ENCODE measurements at regions of chr16 and their contacts with region 1.

Region 1: DNA sequence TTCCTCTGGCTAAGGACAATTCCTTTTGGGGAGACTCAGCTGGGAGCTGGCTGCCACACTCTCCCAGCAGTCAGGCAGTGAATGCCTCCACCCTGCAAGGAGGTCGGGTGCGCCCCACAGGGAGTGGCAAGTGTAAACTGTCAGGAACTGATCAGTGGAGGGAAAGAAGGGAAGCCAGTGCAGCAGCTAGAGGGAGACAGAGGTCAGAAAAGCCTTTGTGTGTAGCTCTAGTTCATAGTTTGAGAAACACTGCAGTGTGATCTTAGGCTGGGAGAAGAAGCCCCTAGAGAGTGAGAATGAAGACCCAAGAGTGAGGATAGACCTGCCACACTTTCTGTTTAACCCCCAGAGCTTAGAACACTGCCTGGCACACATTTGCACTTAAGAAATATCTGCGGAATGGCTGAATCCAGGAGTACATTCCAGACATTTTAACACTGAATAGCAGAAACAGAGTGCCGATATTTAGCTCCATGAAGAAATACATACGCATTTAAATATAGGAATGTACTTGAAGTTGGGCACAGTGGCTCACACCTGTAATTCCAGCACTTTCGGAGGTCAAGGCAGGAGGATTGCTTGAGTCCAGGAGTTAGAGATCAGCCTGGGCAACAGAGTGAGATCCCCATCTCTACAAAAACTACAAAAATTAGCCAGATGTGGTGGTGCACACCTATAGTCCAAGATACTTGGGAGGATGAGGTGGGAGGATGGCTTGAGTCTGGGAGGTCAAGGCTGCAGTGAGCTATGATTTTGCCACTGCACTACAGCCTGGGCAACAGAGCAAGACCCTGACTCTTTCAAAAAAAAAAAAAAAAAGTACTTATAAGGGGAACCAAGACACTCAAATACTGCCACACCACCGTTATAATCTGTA is 11.1 kb upstream of the SLC5A11 start:
- DNase-seq: peak; percentile 82
- H3K4me3 ChIP-seq: no peak overlapping the region
- H3K27ac ChIP-seq: no peak overlapping the region
- H3K4me1 ChIP-seq: peaks cover 8% of the 10 kb centered on the region
- H3K27me3 ChIP-seq: no peaks in the 10 kb centered on the region
- CTCF ChIP-seq: peak; percentile 47

Region 2: DNA sequence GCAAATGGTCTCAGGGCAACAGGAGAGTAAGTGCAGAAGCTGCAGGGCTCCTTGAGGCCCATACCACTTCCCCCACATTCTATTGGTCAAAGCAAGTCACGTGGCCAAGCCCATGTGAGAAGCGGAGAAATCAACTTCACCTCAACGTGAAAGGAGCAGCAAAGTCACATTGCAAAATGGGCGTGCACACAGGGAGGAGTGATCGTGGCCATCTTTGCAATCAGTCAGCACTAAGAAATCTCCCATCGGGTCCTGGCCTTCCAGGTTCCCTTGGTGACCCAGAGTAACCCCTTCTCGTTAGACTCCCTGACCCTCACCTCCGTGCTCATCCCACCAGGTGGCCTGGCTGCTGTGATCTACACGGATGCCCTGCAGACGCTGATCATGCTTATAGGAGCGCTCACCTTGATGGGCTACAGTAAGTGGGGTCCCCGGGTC is 49.0 kb after region 1 on chr16:
- intact Hi-C with region 1: no loop called
- DNase-seq: no peak
- H3K4me3 ChIP-seq: no peak overlapping the region
- H3K27ac ChIP-seq: no peak overlapping the region
- H3K4me1 ChIP-seq: no peaks in the 10 kb centered on the region
- H3K27me3 ChIP-seq: no peaks in the 10 kb centered on the region
- CTCF ChIP-seq: no peak

Region 3: DNA sequence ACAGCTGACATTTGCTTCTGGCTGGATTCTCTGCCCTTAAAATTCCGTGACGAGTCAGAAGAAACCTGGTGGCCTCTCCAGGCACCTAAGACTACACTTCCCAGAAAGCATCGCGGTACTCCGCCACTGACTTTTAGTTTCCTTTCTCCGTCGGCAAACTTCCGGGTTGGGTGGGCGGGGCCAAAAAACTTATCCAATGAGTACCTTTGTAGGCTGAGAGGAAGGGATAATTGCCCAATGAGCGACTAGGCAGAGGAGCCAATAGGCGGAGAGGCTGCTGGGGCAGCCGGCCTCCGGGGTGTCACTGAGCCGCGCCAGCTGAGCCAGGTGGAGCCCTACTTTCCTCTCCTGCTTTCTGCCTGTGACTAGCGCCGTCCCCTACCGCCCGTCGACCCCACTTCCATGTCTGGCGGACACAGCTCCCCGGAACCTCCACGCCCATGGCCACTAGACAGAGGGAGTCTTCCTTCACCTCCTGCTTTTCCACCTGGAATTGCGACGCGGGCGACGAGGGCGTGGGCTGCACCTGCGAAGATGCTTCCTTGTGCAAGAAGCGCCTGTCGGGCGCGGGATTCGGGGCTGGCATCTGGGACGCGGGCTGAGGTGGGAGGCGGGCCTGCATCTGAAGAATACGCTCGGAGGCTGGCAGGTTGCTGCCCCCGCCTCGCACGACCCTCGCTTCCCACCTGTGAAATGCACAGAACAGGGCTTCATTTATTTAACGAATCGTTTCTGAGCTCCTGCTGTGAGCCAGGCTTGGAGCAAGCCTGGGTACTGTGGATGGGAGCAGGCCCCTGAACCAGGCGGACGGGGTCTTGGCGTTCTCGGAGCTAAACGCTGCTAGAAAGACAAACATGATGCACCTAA is 197.0 kb after region 1 on chr16:
- intact Hi-C with region 1: loop called (anchors 10 kb)
- DNase-seq: peak; percentile 93
- H3K4me3 ChIP-seq: peak overlapping the region; percentile 56
- H3K27ac ChIP-seq: peak overlapping the region; percentile 18
- H3K4me1 ChIP-seq: peaks cover 9% of the 10 kb centered on the region
- H3K27me3 ChIP-seq: no peaks in the 10 kb centered on the region
- CTCF ChIP-seq: no peak

Measured in colonic mucosa (tissue), 4 donors.